ENCODE measurements at regions of chr9 and their contacts with region 1.

Region 1: DNA sequence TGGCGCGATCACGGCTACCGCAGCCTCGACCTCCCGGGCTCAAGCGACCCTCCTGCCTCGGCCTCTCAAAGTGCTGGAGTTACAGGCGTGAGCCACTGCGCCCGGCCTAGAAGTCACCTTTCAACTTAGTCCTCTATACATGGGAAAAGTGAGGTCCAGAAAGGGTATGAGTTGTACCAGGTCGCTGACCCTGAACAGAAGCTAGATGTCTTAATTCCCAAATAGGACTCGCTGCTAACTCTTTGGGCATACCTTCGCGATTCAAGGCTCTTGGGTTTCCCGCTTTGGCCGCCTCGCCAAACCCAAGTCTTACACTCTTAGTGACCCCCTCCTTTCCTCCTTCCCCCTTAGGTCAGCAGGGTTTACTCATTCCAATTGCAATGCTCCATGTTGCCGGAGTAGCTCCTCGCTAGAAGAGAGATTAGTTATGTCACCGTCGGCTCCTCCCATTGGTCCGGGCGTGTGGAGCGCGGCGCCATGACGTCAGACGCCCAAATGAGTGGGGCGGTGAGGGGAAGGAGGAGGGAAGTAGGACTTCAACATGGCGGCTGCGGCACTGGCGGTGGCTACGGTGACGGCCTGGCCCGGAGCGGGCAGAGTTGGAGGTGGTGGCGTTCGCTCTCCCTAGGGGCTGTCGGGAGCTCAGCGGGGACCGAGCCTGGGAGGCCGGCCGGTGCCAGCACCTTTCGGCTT is at the start of gene UBAP1:
- DNase-seq: peak; percentile 88
- ATAC-seq: peak; percentile 99
- H3K4me3 ChIP-seq: peak within 1 kb of the TSS; percentile 90
- H3K27ac ChIP-seq: peak within 1 kb of the TSS; percentile 86
- H3K4me1 ChIP-seq: no peaks in the 10 kb centered on the region
- H3K27me3 ChIP-seq: no peaks in the 10 kb centered on the region
- CTCF ChIP-seq: no peak
- EP300 ChIP-seq: no peak
- POLR2A ChIP-seq: peak; percentile 99
- RAD21 ChIP-seq: no peak
- polyA plus RNA-seq, gene UBAP1: 2.1 to 2.9 TPM

Region 2: DNA sequence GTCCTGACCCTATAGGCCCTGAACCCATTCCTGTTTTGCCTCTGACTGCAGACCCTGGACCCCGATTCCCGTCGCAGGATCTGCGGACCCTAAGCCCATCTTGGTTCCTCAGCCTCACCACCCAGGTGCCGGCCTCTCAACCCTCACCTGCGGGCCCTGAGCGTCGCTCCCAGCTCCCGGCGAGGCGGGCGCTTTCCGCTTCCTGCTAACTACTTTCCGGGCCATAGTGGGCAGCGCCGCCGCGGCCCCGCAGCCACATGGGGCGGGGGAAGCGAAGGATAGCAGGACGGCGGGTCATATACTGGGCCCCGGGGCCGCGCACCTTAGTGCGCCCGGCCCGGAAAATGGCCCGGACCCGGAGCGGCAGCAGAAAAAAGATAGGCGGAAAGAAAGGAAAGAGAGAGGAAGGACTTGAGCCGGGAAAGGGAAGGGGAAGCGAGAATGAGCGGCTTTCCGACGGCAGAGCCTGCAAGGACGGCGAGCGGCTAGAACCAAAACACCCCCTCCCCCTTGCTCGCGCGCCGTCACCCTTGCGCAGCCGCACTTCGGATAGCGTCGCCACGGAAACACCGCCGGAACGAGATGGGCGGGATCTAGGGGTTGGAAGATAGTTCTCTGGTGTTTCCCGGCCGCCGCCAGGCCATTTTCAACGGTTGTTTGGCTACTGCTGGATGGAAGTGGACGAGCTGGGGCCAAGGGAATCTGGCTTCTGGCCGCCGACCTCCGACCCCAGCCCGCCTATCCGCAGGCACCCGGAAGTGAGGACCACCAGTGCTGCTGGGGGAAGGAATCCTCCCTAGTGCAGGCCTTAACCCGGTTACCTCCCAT is 52.2 kb before region 1 on chr9 and contains the start of gene DCAF12:
- CTCF ChIA-PET with region 1: interaction called, 3 read pairs
- POLR2A ChIA-PET with region 1: no interaction called
- RAD21 ChIA-PET with region 1: no interaction called
- SMC1A ChIA-PET with region 1: no interaction called
- in situ Hi-C with region 1: no loop called
- intact Hi-C with region 1: loop called (anchors 5 kb)
- DNase-seq: peak; percentile 75
- ATAC-seq: peak; percentile 90
- H3K4me3 ChIP-seq: peak within 1 kb of the TSS; percentile 97
- H3K27ac ChIP-seq: peak within 1 kb of the TSS; percentile 84
- H3K4me1 ChIP-seq: peaks cover 20% of the 10 kb centered on the region
- H3K27me3 ChIP-seq: no peaks in the 10 kb centered on the region
- CTCF ChIP-seq: no peak
- EP300 ChIP-seq: no peak
- POLR2A ChIP-seq: peak; percentile 77
- RAD21 ChIP-seq: no peak
- polyA plus RNA-seq, gene DCAF12: 11.7 TPM

Measured in GM12878 (cell line).